Heart left ventricle (tissue), 16 donors: ENCODE measurements at regions of chr13 and their contacts with region 1.

Region 1: DNA sequence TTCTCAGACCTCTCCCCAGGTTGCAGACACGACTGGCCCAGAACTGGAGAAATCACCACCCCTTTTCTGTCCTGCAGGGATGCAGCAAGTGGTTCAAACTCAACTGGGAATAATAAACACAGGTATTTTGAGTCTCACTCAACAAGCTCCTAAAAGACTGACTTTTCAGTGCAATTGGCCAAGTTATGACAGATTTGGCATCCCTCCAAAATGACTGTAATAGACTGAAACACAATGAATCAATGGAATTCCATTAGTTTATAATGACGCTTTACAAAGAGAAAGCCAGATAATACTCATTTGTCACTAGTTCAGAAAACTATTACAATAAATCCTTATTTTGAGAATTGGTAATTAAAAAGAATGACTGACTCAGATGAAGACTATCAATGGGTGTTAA is 38.1 kb downstream of the MIPEP start:
- DNase-seq: no peak
- ATAC-seq: no peak
- H3K4me3 ChIP-seq: no peak overlapping the region
- H3K27ac ChIP-seq: no peak overlapping the region
- H3K4me1 ChIP-seq: no peaks in the 10 kb centered on the region
- H3K27me3 ChIP-seq: no peaks in the 10 kb centered on the region
- CTCF ChIP-seq: no peak
- POLR2A ChIP-seq: no peak

Region 2: DNA sequence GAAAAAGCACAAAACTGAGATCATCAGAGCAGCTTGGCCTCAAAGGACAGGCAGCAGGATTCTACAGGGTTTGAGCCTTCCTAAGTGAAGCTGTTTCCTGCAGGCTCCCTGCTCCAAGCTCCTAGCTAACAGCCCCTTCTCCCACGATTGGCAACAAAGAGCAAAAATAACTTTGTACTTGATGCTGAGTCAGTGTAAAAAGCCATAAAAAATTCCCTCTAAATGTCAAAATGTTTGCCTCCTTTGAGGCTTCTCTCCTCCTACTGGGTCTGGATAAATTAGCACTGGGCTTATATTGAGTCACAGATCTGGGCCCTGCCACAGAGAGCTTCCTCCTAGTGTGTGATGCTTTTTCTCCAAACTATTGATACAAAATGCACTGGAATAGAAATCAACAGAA is 127.6 kb before region 1 on chr13:
- intact Hi-C with region 1: loop called in 1 of 10 experiments (anchors 10 kb)
- DNase-seq: no peak
- ATAC-seq: peak in 2 of 4 donors; percentile 55 to 56
- H3K4me3 ChIP-seq: no peak overlapping the region
- H3K27ac ChIP-seq: peak overlapping the region in 6 of 12 donors; percentile 0 to 29 (median 16)
- H3K4me1 ChIP-seq: peaks cover 0 to 15% (median 0%) of the 10 kb centered on the region in 12 donors
- H3K27me3 ChIP-seq: no peaks in the 10 kb centered on the region
- CTCF ChIP-seq: no peak
- POLR2A ChIP-seq: no peak

Region 3: DNA sequence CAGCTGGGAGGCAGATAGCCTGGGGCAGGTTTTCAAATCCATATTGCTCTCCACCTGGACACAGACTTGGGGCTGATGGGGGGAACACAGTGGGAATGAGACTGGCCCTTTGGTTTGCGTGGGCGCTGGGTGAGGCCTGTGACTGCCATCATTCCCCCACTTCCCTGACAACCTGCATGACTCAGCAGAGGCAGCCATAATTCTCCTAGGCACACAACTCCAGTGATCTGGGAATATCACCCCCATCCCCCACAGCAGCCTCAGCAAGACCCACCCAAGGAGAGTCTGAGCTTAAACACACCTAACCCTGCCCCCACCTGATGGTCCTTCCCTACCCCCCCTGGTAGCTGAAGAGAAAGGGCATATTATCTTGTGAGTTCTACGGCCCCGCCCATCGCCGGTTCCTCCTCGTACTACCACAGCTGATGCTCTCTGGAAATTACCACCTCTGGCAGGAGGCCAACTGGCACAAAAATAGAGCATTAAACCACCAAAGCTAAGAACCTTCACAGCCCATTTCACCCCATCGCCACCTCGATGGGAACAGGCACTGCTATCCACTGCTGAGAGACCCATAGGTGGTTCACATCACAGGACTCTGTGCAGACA is 983.9 kb after region 1 on chr13:
- intact Hi-C with region 1: no loop called
- DNase-seq: no peak
- ATAC-seq: no peak
- H3K4me3 ChIP-seq: no peak overlapping the region
- H3K27ac ChIP-seq: no peak overlapping the region
- H3K4me1 ChIP-seq: no peaks in the 10 kb centered on the region
- H3K27me3 ChIP-seq: peaks cover 0 to 12% (median 0%) of the 10 kb centered on the region in 9 donors
- CTCF ChIP-seq: no peak
- POLR2A ChIP-seq: no peak